Mammary epithelial cell (primary cell): ENCODE measurements at regions of chr2 and their contacts with region 1.

Region 1: DNA sequence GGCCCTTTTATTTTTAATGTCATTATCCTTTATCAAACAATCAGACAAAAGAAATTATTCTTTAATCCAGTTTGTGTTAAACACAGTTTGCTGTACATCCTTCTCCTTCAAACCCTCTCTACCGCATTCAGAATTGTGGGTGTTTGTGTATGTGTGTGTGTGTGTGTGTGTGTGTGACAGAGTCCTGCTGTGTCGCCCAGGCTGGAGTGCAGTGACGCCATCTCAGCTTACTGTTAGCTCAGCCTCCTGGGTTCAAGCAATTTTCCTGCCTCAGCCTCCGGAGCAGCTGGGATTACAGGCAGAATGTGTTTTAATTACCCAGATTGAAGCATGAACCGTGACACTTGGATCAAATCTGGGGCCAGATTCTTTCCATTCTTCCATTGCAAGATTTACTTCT is 723.7 kb downstream of the DCDC2C start:
- DNase-seq: no peak
- H3K4me3 ChIP-seq: no peak overlapping the region
- H3K27ac ChIP-seq: no peak overlapping the region
- H3K4me1 ChIP-seq: no peaks in the 10 kb centered on the region
- H3K27me3 ChIP-seq: no peaks in the 10 kb centered on the region
- CTCF ChIP-seq: no peak

Region 2: GRCh38 chr2:4214444-4215200 is 212.5 kb before region 1 on chr2:
- CTCF ChIA-PET with region 1: no interaction called
- dilution Hi-C with region 1: no loop called
- in situ Hi-C with region 1: no loop called
- intact Hi-C with region 1: no loop called
- DNase-seq: no peak
- H3K4me3 ChIP-seq: no peak overlapping the region
- H3K27ac ChIP-seq: no peak overlapping the region
- H3K4me1 ChIP-seq: no peaks in the 10 kb centered on the region
- H3K27me3 ChIP-seq: no peaks in the 10 kb centered on the region
- CTCF ChIP-seq: no peak

Region 3: DNA sequence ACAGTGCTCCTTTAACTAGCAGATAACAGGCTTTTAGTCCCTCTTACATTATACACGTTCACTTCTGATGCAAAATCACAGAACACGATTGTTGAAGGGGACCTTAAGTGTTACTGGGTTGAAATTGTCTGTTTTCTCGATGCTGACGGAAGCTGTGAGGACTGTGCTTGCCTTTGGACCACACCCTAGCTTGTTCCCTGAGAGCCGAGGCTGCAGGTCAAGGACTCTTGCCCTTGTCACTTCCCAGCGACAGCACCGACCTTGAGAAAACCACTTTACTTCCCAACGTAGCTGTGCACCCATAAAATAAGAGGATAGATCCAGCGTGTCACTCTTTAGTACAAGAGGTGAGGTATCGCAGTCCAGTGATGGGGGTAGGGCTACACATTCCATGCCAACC is 22.7 kb before region 1 on chr2:
- CTCF ChIA-PET with region 1: no interaction called
- dilution Hi-C with region 1: no loop called
- in situ Hi-C with region 1: no loop called
- intact Hi-C with region 1: no loop called
- DNase-seq: no peak
- H3K4me3 ChIP-seq: no peak overlapping the region
- H3K27ac ChIP-seq: no peak overlapping the region
- H3K4me1 ChIP-seq: no peaks in the 10 kb centered on the region
- H3K27me3 ChIP-seq: no peaks in the 10 kb centered on the region
- CTCF ChIP-seq: no peak

Region 4: GRCh38 chr2:4486971-4487370 is 59.9 kb after region 1 on chr2:
- CTCF ChIA-PET with region 1: no interaction called
- dilution Hi-C with region 1: no loop called
- in situ Hi-C with region 1: no loop called
- intact Hi-C with region 1: no loop called
- DNase-seq: no peak
- H3K4me3 ChIP-seq: no peak overlapping the region
- H3K27ac ChIP-seq: no peak overlapping the region
- H3K4me1 ChIP-seq: no peaks in the 10 kb centered on the region
- H3K27me3 ChIP-seq: no peaks in the 10 kb centered on the region
- CTCF ChIP-seq: no peak

Region 5: GRCh38 chr2:5264309-5264803 is 837.3 kb after region 1 on chr2:
- CTCF ChIA-PET with region 1: interaction called, 10 read pairs
- dilution Hi-C with region 1: no loop called
- in situ Hi-C with region 1: no loop called
- intact Hi-C with region 1: no loop called
- DNase-seq: no peak
- H3K4me3 ChIP-seq: no peak overlapping the region
- H3K27ac ChIP-seq: no peak overlapping the region
- H3K4me1 ChIP-seq: no peaks in the 10 kb centered on the region
- H3K27me3 ChIP-seq: no peaks in the 10 kb centered on the region
- CTCF ChIP-seq: no peak